CD4-positive, alpha-beta T cell (primary cell): ENCODE measurements at regions of chr3 and their contacts with region 1.

Region 1: GRCh38 chr3:141421639-141422330 is 53.5 kb downstream of the ZBTB38 start:
- DNase-seq: no peak
- ATAC-seq: no peak
- H3K4me3 ChIP-seq: no peak overlapping the region
- H3K4me3 Mint-ChIP-seq: no peak overlapping the region
- H3K27ac ChIP-seq: no peak overlapping the region
- H3K27ac Mint-ChIP-seq: no peak overlapping the region
- H3K4me1 ChIP-seq: peaks cover 21% of the 10 kb centered on the region
- H3K4me1 Mint-ChIP-seq: peaks cover 61% of the 10 kb centered on the region
- H3K27me3 ChIP-seq: no peaks in the 10 kb centered on the region
- H3K27me3 Mint-ChIP-seq: no peaks in the 10 kb centered on the region
- CTCF ChIP-seq: no peak

Region 2: GRCh38 chr3:141039589-141039988 is 382.2 kb before region 1 on chr3:
- CTCF ChIA-PET with region 1: no interaction called
- POLR2A ChIA-PET with region 1: no interaction called
- intact Hi-C with region 1: no loop called
- DNase-seq: no peak
- ATAC-seq: no peak
- H3K4me3 ChIP-seq: no peak overlapping the region
- H3K4me3 Mint-ChIP-seq: no peak overlapping the region
- H3K27ac ChIP-seq: no peak overlapping the region
- H3K27ac Mint-ChIP-seq: no peak overlapping the region
- H3K4me1 ChIP-seq: no peaks in the 10 kb centered on the region
- H3K4me1 Mint-ChIP-seq: no peaks in the 10 kb centered on the region
- H3K27me3 ChIP-seq: peaks cover 3 to 9% of the 10 kb centered on the region in 2 experiments
- H3K27me3 Mint-ChIP-seq: peaks cover 8% of the 10 kb centered on the region
- CTCF ChIP-seq: no peak

Region 3: GRCh38 chr3:141436180-141436579 is 14.4 kb after region 1 on chr3:
- CTCF ChIA-PET with region 1: interaction called, 6 read pairs
- POLR2A ChIA-PET with region 1: interaction called, 3 read pairs
- intact Hi-C with region 1: loop called in 1 of 2 experiments (anchors 2 kb)
- DNase-seq: no peak
- ATAC-seq: no peak
- H3K4me3 ChIP-seq: no peak overlapping the region
- H3K4me3 Mint-ChIP-seq: no peak overlapping the region
- H3K27ac ChIP-seq: no peak overlapping the region
- H3K27ac Mint-ChIP-seq: no peak overlapping the region
- H3K4me1 ChIP-seq: peaks cover 2% of the 10 kb centered on the region
- H3K4me1 Mint-ChIP-seq: peaks cover 50% of the 10 kb centered on the region
- H3K27me3 ChIP-seq: no peaks in the 10 kb centered on the region
- H3K27me3 Mint-ChIP-seq: no peaks in the 10 kb centered on the region
- CTCF ChIP-seq: no peak

Region 4: GRCh38 chr3:142417302-142417701 is 995.5 kb after region 1 on chr3:
- CTCF ChIA-PET with region 1: no interaction called
- POLR2A ChIA-PET with region 1: no interaction called
- intact Hi-C with region 1: no loop called
- DNase-seq: no peak
- ATAC-seq: no peak
- H3K4me3 ChIP-seq: no peak overlapping the region
- H3K4me3 Mint-ChIP-seq: no peak overlapping the region
- H3K27ac ChIP-seq: no peak overlapping the region
- H3K27ac Mint-ChIP-seq: no peak overlapping the region
- H3K4me1 ChIP-seq: no peaks in the 10 kb centered on the region
- H3K4me1 Mint-ChIP-seq: no peaks in the 10 kb centered on the region
- H3K27me3 ChIP-seq: no peaks in the 10 kb centered on the region
- H3K27me3 Mint-ChIP-seq: no peaks in the 10 kb centered on the region
- CTCF ChIP-seq: no peak